ENCODE measurements at regions of chr9 and their contacts with region 1.

Region 1: DNA sequence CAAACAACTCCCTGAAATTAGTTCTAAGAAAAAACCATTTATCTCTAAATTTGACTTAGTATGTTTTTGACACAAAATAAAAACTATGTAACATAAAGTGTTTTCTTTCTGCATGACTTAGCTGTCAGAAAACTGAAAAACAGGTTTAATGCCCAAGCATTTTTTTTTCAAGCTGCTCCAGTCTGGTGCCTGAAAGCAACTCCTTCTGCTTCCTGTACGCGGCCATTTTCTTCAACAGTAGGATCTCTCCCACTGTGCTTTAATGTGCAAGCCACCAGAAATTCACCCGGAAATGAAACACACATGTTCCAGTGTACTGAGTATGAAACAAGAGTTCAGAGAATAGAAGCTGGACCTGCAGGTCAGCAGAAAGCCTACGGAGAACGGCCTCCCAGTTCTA is 161.2 kb downstream of the MED27 start:
- DNase-seq: no peak
- ATAC-seq: no peak
- H3K4me3 ChIP-seq: no peak overlapping the region
- H3K27ac ChIP-seq: no peak overlapping the region
- H3K4me1 ChIP-seq: no peaks in the 10 kb centered on the region
- H3K27me3 ChIP-seq: no peaks in the 10 kb centered on the region
- CTCF ChIP-seq: no peak
- POLR2A ChIP-seq: no peak
- RAD21 ChIP-seq: no peak

Region 2: DNA sequence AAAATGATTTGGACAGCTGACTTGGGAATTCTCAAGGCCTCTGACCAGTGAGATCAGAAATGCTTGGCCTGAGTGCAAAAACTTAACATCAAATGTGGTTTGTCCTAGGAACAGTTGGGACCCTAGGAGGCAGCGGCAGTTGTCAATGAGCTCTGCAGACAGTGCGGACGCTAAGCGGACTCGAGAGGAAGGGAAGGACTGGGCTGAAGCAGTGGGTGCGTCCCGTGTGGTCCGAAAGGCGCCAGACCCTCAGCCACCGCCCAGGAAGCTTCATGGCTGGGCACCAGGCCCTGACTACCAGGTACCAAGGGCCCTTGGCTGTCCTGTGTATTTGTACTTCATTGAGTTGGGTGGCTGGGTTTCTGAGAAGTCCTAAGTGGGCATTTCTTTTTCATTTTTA is 459.4 kb before region 1 on chr9:
- CTCF ChIA-PET with region 1: no interaction called
- POLR2A ChIA-PET with region 1: no interaction called
- dilution Hi-C with region 1: no loop called
- in situ Hi-C with region 1: no loop called
- intact Hi-C with region 1: no loop called
- DNase-seq: no peak
- ATAC-seq: no peak
- H3K4me3 ChIP-seq: no peak overlapping the region
- H3K27ac ChIP-seq: no peak overlapping the region
- H3K4me1 ChIP-seq: no peaks in the 10 kb centered on the region
- H3K27me3 ChIP-seq: no peaks in the 10 kb centered on the region
- CTCF ChIP-seq: no peak
- POLR2A ChIP-seq: no peak
- RAD21 ChIP-seq: no peak

Region 3: GRCh38 chr9:131899296-131900228 is 18.9 kb before region 1 on chr9:
- CTCF ChIA-PET with region 1: no interaction called
- POLR2A ChIA-PET with region 1: interaction called, 15 read pairs
- dilution Hi-C with region 1: no loop called
- in situ Hi-C with region 1: no loop called
- intact Hi-C with region 1: no loop called
- DNase-seq: no peak
- ATAC-seq: no peak
- H3K4me3 ChIP-seq: no peak overlapping the region
- H3K27ac ChIP-seq: no peak overlapping the region
- H3K4me1 ChIP-seq: no peaks in the 10 kb centered on the region; the same call in 1 of the 2 replicates
- H3K27me3 ChIP-seq: no peaks in the 10 kb centered on the region
- CTCF ChIP-seq: no peak
- POLR2A ChIP-seq: no peak
- RAD21 ChIP-seq: no peak

Measured in IMR-90 (cell line).